Naive thymus-derived CD4-positive, alpha-beta T cell (primary cell): ENCODE measurements at regions of chr22 and their contacts with region 1.

Region 1: DNA sequence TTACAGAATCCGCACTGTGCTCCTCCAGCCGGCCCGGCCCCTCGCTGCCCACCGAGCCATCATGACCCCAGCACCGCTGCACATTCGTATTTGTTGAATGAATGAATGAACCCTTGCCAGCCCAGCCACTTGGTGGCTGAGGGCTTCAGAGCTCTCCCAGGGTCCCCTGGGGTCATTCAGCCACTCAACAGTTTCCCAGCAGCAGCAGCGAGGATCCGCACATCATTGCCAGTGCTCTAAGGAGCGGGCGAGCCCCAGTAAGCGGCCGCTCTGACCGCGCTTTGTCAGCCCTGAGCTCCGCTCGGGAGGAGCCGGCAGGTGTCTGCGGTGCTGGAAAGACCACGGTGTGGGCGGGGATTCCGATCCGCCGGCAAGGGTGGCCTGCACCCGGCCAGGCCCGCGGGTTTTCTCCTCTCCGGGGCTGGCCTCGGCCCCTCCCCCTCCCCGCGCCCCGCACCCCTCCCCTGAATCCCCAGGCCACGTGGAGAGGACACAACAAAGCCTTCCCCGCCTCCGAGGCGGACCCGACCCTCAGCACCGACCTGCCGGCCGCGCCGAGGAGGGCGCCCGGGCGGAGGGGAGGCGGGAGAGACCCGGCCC is 563 bp downstream of the BID start:
- DNase-seq: peak in 5 of 9 donors; percentile 39 to 76 (median 41)
- ATAC-seq: peak; percentile 40
- H3K4me3 ChIP-seq: peak overlapping the region; percentile 64
- H3K4me3 Mint-ChIP-seq: peak overlapping the region; percentile 76 to 95 (median 90)
- H3K27ac ChIP-seq: peak overlapping the region; percentile 69
- H3K27ac Mint-ChIP-seq: peak overlapping the region in 8 of 9 donors; percentile 72 to 93 (median 82)
- H3K4me1 ChIP-seq: peaks cover 46 to 63% of the 10 kb centered on the region in 2 donors
- H3K4me1 Mint-ChIP-seq: peaks cover 48 to 81% (median 61%) of the 10 kb centered on the region in 7 donors
- H3K27me3 ChIP-seq: no peaks in the 10 kb centered on the region
- H3K27me3 Mint-ChIP-seq: peaks cover 0 to 8% (median 0%) of the 10 kb centered on the region in 5 donors

Region 2: GRCh38 chr22:17158568-17159503 is 614.9 kb before region 1 on chr22 and contains the start of gene HDHD5:
- CTCF ChIA-PET with region 1: no interaction called
- POLR2A ChIA-PET with region 1: interaction called, 5 read pairs
- intact Hi-C with region 1: loop called in 1 of 2 experiments (anchors 5 kb)
- DNase-seq: peak; percentile 71 to 87 (median 84)
- ATAC-seq: peak; percentile 96
- H3K4me3 ChIP-seq: peak within 1 kb of the TSS; percentile 79
- H3K4me3 Mint-ChIP-seq: peak within 1 kb of the TSS; percentile 80 to 91 (median 88)
- H3K27ac ChIP-seq: peak within 1 kb of the TSS; percentile 79
- H3K27ac Mint-ChIP-seq: peak within 1 kb of the TSS in 8 of 9 donors; percentile 36 to 88 (median 76)
- H3K4me1 ChIP-seq: peaks cover 18 to 26% of the 10 kb centered on the region in 2 donors
- H3K4me1 Mint-ChIP-seq: peaks cover 18 to 48% (median 36%) of the 10 kb centered on the region in 7 donors
- H3K27me3 ChIP-seq: no peaks in the 10 kb centered on the region
- H3K27me3 Mint-ChIP-seq: no peaks in the 10 kb centered on the region
- total RNA-seq, gene HDHD5: 18.8 to 50.9 (median 26.2) TPM

Region 3: GRCh38 chr22:17628304-17629166 is 145.2 kb before region 1 on chr22 and contains the start of gene ATP6V1E1:
- CTCF ChIA-PET with region 1: no interaction called
- POLR2A ChIA-PET with region 1: no interaction called
- intact Hi-C with region 1: loop called in 1 of 2 experiments (anchors 2 kb)
- DNase-seq: peak; percentile 82 to 96 (median 94)
- ATAC-seq: peak; percentile 100
- H3K4me3 ChIP-seq: peak within 1 kb of the TSS; percentile 100
- H3K4me3 Mint-ChIP-seq: peak within 1 kb of the TSS; percentile 89 to 99 (median 96)
- H3K27ac ChIP-seq: peak within 1 kb of the TSS; percentile 97
- H3K27ac Mint-ChIP-seq: peak within 1 kb of the TSS; percentile 90 to 99 (median 97)
- H3K4me1 ChIP-seq: peaks cover 13 to 14% of the 10 kb centered on the region in 2 donors
- H3K4me1 Mint-ChIP-seq: peaks cover 7 to 40% (median 31%) of the 10 kb centered on the region in 7 donors
- H3K27me3 ChIP-seq: no peaks in the 10 kb centered on the region
- H3K27me3 Mint-ChIP-seq: no peaks in the 10 kb centered on the region
- total RNA-seq, gene ATP6V1E1: 51.0 to 101 (median 80.4) TPM

Region 4: GRCh38 chr22:17638432-17639246 is 135.1 kb before region 1 on chr22 and contains the start of gene BCL2L13:
- CTCF ChIA-PET with region 1: no interaction called
- POLR2A ChIA-PET with region 1: interaction called, 7 read pairs
- intact Hi-C with region 1: loop called (anchors 2 kb)
- DNase-seq: peak; percentile 77 to 91 (median 88)
- ATAC-seq: peak; percentile 96
- H3K4me3 ChIP-seq: peak within 1 kb of the TSS; percentile 73
- H3K4me3 Mint-ChIP-seq: peak within 1 kb of the TSS; percentile 87 to 95 (median 90)
- H3K27ac ChIP-seq: peak within 1 kb of the TSS; percentile 99
- H3K27ac Mint-ChIP-seq: peak within 1 kb of the TSS; percentile 92 to 99 (median 96)
- H3K4me1 ChIP-seq: peaks cover 12 to 18% of the 10 kb centered on the region in 2 donors
- H3K4me1 Mint-ChIP-seq: peaks cover 17 to 38% (median 34%) of the 10 kb centered on the region in 7 donors
- H3K27me3 ChIP-seq: no peaks in the 10 kb centered on the region
- H3K27me3 Mint-ChIP-seq: no peaks in the 10 kb centered on the region
- total RNA-seq, gene BCL2L13: 21.9 to 39.1 (median 32.8) TPM

Region 5: GRCh38 chr22:17742527-17742902 is 31.2 kb before region 1 on chr22:
- CTCF ChIA-PET with region 1: interaction called, 9 read pairs
- POLR2A ChIA-PET with region 1: no interaction called
- intact Hi-C with region 1: loop called in 1 of 2 experiments (anchors 2 kb)
- DNase-seq: peak; percentile 32 to 72 (median 53)
- ATAC-seq: peak; percentile 86
- H3K4me3 ChIP-seq: no peak overlapping the region
- H3K4me3 Mint-ChIP-seq: no peak overlapping the region
- H3K27ac ChIP-seq: no peak overlapping the region
- H3K27ac Mint-ChIP-seq: peak overlapping the region in 3 of 9 donors; percentile 8 to 67 (median 9)
- H3K4me1 ChIP-seq: no peaks in the 10 kb centered on the region
- H3K4me1 Mint-ChIP-seq: peaks cover 3 to 11% (median 7%) of the 10 kb centered on the region in 7 donors
- H3K27me3 ChIP-seq: no peaks in the 10 kb centered on the region
- H3K27me3 Mint-ChIP-seq: no peaks in the 10 kb centered on the region

Region 6: GRCh38 chr22:17785185-17786184 is 11.8 kb after region 1 on chr22:
- CTCF ChIA-PET with region 1: interaction called, 13 read pairs
- POLR2A ChIA-PET with region 1: interaction called, 9 read pairs
- intact Hi-C with region 1: loop called in 1 of 2 experiments (anchors 1 kb)
- DNase-seq: peak; percentile 54 to 72 (median 65)
- ATAC-seq: peak; percentile 60
- H3K4me3 ChIP-seq: no peak overlapping the region
- H3K4me3 Mint-ChIP-seq: no peak overlapping the region
- H3K27ac ChIP-seq: no peak overlapping the region
- H3K27ac Mint-ChIP-seq: peak overlapping the region in 2 of 9 donors; percentile 28 to 36
- H3K4me1 ChIP-seq: peaks cover 12 to 20% of the 10 kb centered on the region in 2 donors
- H3K4me1 Mint-ChIP-seq: peaks cover 8 to 25% (median 13%) of the 10 kb centered on the region in 7 donors
- H3K27me3 ChIP-seq: no peaks in the 10 kb centered on the region
- H3K27me3 Mint-ChIP-seq: no peaks in the 10 kb centered on the region

Region 7: DNA sequence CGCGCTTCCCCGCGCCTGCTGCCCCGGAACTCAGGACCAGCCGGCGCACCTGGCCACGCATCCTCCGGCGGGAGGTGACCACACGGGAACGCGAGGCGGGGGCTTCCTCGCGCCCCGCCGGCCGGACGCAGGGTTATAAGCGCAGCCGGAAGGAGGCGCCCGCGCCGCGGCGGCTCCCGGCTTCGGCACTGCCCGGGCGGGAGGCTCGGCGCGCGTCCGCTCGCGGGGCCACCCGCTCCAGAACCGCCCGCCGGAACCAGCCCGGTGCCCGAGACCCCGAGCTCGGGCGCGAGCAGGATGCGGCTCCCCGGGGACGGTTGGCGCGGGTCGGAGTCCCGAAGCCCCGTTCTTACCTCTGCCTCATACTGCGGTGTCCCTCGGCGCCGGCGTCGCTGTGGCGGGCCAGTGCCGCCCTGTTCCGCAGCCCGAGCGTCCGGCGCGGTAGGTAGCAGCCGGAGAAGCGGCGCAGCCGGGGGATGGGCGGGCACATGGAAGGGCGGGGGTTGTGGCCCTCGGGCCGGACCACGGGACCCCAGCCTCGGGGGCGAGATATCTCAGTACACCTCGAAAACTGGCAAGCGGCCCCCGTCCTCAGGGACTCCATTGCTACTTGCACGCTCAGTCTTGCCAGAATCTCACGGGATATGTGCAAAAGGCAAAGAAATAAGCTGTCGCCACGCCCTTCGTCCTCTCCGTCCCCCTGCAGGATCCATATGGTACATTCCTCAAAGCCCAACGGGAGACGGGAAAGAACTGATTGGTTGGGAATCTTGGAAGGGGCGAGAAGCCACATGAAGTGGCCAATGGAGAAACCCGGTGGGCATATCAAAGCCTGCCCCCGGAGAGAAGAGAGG is 227.6 kb after region 1 on chr22:
- CTCF ChIA-PET with region 1: no interaction called
- POLR2A ChIA-PET with region 1: no interaction called
- intact Hi-C with region 1: loop called in 1 of 2 experiments (anchors 1 kb)
- DNase-seq: peak in 8 of 9 donors; percentile 18 to 77 (median 49)
- ATAC-seq: peak; percentile 69
- H3K4me3 ChIP-seq: peak overlapping the region; percentile 85
- H3K4me3 Mint-ChIP-seq: peak overlapping the region; percentile 79 to 96 (median 92)
- H3K27ac ChIP-seq: peak overlapping the region; percentile 63
- H3K27ac Mint-ChIP-seq: peak overlapping the region in 8 of 9 donors; percentile 62 to 97 (median 84)
- H3K4me1 ChIP-seq: peaks cover 13 to 20% of the 10 kb centered on the region in 2 donors
- H3K4me1 Mint-ChIP-seq: peaks cover 33 to 50% (median 47%) of the 10 kb centered on the region in 7 donors
- H3K27me3 ChIP-seq: no peaks in the 10 kb centered on the region
- H3K27me3 Mint-ChIP-seq: peaks cover 0 to 27% (median 3%) of the 10 kb centered on the region in 5 donors